ENCODE measurements at regions of chr11 and their contacts with region 1.

Region 1: GRCh38 chr11:61477727-61478148 is 30.8 kb upstream of the LRRC10B start:
- DNase-seq: peak; percentile 86
- ATAC-seq: peak; percentile 43
- H3K4me3 Mint-ChIP-seq: no peak overlapping the region
- H3K27ac Mint-ChIP-seq: no peak overlapping the region
- H3K4me1 Mint-ChIP-seq: peaks cover 29% of the 10 kb centered on the region
- H3K27me3 Mint-ChIP-seq: peaks cover 3% of the 10 kb centered on the region; the same call in 1 of the 2 replicates
- CTCF ChIP-seq: peak; percentile 95

Region 2: DNA sequence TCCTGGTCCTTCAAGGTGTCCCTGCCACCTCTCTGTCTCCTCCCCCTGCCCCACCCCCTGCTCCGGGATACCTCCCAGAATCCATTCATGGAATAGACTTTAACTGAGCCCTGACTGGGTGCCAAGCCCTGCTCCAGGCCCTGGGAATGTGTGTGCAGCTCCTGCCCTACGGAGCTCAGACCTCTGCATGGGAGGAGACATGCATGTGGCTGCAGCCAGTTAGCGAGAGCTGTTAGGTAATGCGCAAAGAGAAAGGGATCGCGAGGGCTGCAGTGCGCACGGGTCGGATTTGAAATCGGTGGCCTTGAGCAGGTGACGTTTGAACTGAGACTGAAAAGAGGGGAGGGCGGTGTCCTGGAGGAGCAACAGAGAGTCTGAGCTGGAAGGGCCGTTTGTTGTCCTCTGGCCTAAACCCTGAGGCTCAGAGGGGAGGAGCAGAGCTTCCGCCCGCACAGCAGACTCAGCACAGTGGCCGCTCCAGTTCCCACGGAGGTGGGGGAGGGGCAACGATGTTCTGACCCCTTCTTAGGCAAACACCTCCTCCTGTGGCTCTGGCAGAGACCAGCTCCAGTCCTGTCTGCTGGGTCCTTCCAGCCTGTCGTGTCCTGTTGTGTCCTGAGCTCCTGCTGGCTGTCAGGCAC is 11.0 kb after region 1 on chr11:
- CTCF ChIA-PET with region 1: interaction called, 28 read pairs
- POLR2A ChIA-PET with region 1: no interaction called
- DNase-seq: peak; percentile 76
- ATAC-seq: peak; percentile 60
- H3K4me3 Mint-ChIP-seq: peak overlapping the region; percentile 50
- H3K27ac Mint-ChIP-seq: peak overlapping the region; percentile 95
- H3K4me1 Mint-ChIP-seq: peaks cover 42% of the 10 kb centered on the region
- H3K27me3 Mint-ChIP-seq: peaks cover 7% of the 10 kb centered on the region; the same call in 1 of the 2 replicates
- CTCF ChIP-seq: no peak

Region 3: DNA sequence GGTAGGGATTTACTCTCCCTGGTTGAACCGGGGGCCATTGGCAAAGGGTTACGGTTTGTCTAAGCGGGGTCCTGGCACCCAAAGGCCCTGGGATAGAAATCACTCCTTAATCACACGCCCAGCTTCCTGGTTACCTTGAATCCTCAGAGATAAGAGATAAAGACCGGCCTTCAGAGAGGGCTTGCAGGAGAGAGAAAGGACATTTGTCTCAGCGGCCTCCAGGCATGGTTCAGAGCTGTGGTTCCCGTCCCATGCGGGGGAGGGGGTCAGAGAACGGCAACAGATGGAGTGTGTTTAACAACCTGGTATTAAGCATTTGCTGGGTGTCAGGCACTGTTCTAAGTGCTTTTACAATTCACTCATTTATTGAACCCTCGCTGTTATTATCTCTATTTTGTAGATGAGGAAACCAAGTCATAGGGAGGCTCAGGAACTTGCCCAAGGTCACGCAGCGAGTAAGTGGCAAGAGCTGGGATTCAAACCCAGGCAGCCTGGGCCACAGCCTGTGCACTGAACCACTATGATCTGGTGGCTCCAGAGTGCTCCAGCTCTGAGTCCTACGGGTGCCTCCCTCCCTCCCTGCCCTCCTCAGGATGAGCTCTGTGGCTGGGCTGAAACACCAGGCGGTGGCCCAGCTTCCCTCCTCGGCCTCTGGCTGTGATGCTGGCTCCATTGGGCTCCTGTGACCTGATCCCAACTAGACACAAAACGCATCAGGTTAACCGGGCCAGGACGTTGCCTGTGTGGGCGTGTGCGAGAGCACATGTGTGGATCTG is 49.4 kb after region 1 on chr11:
- CTCF ChIA-PET with region 1: interaction called, 82 read pairs
- POLR2A ChIA-PET with region 1: no interaction called
- DNase-seq: no peak
- ATAC-seq: no peak
- H3K4me3 Mint-ChIP-seq: no peak overlapping the region
- H3K27ac Mint-ChIP-seq: peak overlapping the region; percentile 90; the same call in 1 of the 2 replicates
- H3K4me1 Mint-ChIP-seq: peaks cover 10% of the 10 kb centered on the region
- H3K27me3 Mint-ChIP-seq: no peaks in the 10 kb centered on the region
- CTCF ChIP-seq: no peak

Region 4: GRCh38 chr11:61555051-61555969 is 77.6 kb after region 1 on chr11:
- CTCF ChIA-PET with region 1: interaction called, 11 read pairs
- POLR2A ChIA-PET with region 1: no interaction called
- DNase-seq: peak; percentile 66
- ATAC-seq: peak; percentile 64
- H3K4me3 Mint-ChIP-seq: peak overlapping the region; percentile 70
- H3K27ac Mint-ChIP-seq: no peak overlapping the region
- H3K4me1 Mint-ChIP-seq: peaks cover 39% of the 10 kb centered on the region
- H3K27me3 Mint-ChIP-seq: peaks cover 30% of the 10 kb centered on the region
- CTCF ChIP-seq: peak; percentile 49; the same call in 1 of the 2 replicates

Region 5: DNA sequence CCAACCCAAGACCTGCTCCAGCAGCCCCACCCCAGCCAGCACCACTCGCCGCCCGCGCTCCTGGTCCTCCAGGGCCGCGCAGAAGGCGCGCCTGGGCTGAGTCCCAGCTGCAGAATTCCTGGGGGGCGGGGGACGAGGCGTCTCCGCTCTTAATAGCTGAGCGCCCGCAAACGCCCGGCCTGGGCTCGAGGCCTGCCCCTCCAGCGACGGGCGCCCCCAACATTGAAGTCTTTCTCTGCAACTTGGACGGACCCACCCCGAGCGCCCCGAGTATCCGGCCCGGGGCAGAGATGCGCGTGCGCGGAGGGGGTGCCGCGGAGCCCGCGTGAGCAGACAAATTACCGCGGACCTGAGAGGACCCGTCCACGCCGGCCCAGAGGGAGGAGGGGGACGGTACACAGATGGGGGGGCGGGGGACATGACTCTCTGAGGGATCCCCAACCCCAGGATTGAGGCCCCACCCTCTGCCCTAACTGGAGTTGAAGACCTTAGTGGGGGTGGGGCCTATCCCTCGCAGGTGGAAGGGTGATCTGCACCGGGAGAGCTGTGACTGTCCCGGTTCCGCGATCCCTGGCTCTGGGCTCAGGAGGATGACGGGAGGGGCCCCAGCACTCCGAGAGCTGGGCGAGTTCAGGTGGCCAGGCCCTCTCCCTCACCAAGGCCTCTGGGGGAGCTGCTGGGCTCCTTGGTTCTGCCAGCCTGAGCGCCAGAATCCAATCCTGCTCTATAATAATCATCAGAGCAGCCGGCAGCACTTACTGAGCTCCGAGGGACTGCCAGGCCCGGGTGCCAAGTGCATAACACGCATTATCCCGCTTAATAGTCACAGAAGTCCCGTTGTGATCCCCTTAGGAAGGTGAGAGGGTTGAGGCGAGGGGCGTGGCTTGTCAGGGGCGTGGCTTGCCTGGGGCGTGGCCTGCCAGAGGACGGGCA is 110.0 kb after region 1 on chr11:
- CTCF ChIA-PET with region 1: interaction called, 16 read pairs
- POLR2A ChIA-PET with region 1: no interaction called
- DNase-seq: peak; percentile 96
- ATAC-seq: peak; percentile 80
- H3K4me3 Mint-ChIP-seq: peak overlapping the region; percentile 74
- H3K27ac Mint-ChIP-seq: no peak overlapping the region
- H3K4me1 Mint-ChIP-seq: peaks cover 34% of the 10 kb centered on the region
- H3K27me3 Mint-ChIP-seq: peaks cover 59% of the 10 kb centered on the region
- CTCF ChIP-seq: no peak

Region 6: GRCh38 chr11:61890536-61891330 is 413.0 kb after region 1 on chr11:
- CTCF ChIA-PET with region 1: no interaction called
- POLR2A ChIA-PET with region 1: no interaction called
- DNase-seq: no peak
- ATAC-seq: peak; percentile 7
- H3K4me3 Mint-ChIP-seq: peak overlapping the region; percentile 69
- H3K27ac Mint-ChIP-seq: no peak overlapping the region
- H3K4me1 Mint-ChIP-seq: peaks cover 3% of the 10 kb centered on the region
- H3K27me3 Mint-ChIP-seq: 0 out of 2 replicates have a peak, but pooled peaks cover 4% of the 10 kb centered on the region
- CTCF ChIP-seq: no peak